G401 (cell line): ENCODE measurements at regions of chr11 and their contacts with region 1.

Region 1: DNA sequence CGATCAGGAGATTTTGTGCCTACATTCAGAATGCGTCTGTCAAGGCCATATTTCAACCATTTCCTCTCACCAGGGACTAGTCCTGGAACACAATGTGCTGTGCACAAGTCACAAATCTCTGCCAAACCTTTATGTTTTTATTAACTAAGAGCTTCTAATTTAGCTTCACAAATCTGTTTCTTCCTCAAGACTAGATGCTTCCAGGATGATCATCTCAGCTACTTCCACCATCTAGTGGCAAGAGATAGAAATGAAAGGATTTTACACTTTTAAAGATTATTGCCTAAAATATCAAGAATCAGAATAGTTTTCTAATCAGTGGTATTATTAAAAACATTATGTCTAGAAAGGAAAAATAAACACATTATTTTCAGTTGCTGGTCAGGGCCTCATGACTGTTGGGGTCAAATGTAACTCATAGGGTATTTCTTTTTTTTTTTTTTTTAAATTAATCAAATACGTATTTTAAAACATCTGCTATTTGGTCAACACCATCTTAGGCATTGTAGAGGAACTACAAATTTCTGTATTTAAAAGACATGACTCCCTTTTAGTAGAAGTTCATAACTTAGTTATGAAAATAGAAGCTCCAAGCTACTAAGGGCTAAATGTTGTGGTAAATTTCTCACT is 1102.6 kb downstream of the DLG2 start:
- DNase-seq: peak; percentile 68

Region 2: GRCh38 chr11:84384731-84385130 is 139.8 kb before region 1 on chr11:
- in situ Hi-C with region 1: loop called (anchors 25 kb)
- DNase-seq: peak; percentile 74

Region 3: GRCh38 chr11:84993386-84993785 is 468.8 kb after region 1 on chr11:
- in situ Hi-C with region 1: no loop called
- DNase-seq: no peak